AG04450 (cell line): ENCODE measurements at regions of chr13 and their contacts with region 1.

Region 1: GRCh38 chr13:19633479-19634255 is at the start of gene MPHOSPH8:
- DNase-seq: peak; percentile 93
- H3K4me3 ChIP-seq: peak within 1 kb of the TSS; percentile 93
- H3K27ac ChIP-seq: peak within 1 kb of the TSS; percentile 76
- H3K27me3 ChIP-seq: no peaks in the 10 kb centered on the region
- CTCF ChIP-seq: no peak
- polyA plus RNA-seq, gene MPHOSPH8: 19.7 and 24.8 TPM in 2 replicates

Region 2: DNA sequence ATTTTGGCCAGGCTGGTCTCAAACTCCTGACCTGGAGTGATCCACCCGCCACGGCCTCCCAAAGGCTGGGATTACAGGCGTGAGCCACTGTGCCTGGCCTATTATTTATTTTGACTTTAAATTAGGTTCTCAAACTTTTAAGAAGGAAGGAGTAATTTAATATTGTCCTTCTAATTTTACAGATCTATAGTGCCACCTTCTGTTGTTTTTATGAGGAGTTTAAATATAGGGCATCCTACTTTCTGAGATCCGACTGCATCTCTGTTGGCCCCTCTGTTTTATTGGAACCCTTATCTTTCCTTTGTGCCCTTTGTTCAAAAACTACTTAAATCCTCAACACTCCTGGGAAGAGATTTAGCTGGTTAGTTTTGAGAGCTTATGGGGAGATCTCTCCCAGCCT is 255.1 kb after region 1 on chr13:
- CTCF ChIA-PET with region 1: interaction called, 11 read pairs
- POLR2A ChIA-PET with region 1: interaction called, 6 read pairs
- DNase-seq: no peak
- H3K4me3 ChIP-seq: no peak overlapping the region
- H3K27ac ChIP-seq: no peak overlapping the region
- H3K27me3 ChIP-seq: no peaks in the 10 kb centered on the region
- CTCF ChIP-seq: peak; percentile 21; the same call in 1 of the 2 replicates